HEK293T (cell line): ENCODE measurements at regions of chr11 and their contacts with region 1.

Region 1: DNA sequence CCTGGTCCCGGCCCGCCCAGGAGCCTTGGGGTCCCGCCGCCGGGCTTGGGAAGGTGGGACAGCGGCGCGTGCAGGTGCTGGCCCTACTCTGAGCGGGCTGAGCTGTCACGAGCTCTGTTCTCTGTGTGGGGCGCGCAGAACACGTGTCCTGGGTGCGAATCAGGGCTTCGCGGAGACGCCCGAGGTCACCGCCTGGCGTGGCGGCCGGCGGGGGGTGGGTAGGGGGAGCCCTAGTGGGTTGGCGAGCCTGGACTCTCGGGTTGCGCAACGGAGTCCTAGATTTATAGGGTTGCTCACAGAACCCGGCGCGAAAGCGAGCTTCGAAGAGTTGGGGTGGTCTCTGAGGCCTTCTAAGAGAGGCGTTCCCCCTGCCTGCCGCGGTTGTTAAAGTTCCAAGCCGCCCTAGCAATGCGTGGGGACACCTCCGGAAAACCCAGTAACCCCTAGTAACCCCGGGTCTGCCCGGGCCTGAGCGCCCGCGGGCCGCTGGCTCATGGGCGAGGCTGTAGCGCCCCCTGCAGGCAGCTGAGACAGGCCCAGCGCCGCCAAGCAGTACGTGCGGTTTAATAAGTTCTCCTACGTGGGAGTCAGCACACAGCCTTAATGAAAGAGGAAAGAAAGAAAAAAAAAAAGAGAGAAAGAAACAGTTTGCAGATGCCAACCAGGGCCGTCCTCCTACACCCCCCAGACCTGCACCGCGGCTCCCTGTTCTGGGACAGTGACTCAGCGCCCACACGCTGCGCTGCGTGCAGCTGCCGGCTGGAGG is 2.8 kb downstream of the ADM start:
- DNase-seq: peak; percentile 69

Region 2: DNA sequence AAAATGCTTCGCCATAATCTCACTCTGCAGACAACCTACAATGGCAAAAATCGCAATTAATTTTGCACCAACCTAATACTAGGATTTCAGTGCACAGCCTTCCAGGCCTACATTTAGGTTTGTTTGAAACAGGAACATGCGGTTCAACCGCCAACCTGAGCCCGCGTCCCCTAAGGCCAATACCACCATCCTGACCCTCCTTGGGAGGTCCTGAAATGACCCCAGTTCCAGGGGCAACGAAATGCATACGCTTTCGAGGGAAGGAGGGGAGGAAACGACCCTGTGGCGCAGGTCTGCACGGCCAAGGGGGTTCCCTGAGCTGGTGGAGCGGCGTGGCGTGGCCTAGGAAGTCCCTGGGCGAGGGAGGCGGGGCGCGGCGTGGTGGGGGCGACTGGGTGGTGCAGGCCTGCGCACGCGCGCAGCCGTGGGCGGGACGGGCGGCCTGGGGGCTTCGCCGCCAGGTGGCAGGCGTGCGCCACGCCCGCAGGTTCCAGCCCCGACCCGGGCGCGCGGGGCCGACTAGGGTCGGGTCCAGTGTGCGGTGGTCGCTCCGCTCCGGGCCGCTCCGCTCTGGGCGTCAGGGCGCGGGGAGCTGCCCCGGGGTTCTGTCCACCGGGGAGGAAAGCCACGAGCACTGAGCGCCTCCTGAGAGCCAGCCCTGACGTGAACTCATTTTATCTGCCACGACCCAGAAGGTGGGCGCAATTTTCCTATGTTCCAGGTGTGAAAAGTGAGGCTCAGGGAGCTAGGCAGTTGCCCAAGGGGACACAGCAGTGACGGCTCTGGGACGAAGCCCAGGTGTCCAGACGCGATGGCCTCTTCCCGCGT is 549.6 kb before region 1 on chr11:
- CTCF ChIA-PET with region 1: interaction called, 5 read pairs
- POLR2A ChIA-PET with region 1: interaction called, 14 read pairs
- DNase-seq: peak; percentile 96

Region 3: GRCh38 chr11:10208131-10208575 is 99.5 kb before region 1 on chr11:
- CTCF ChIA-PET with region 1: interaction called, 22 read pairs
- POLR2A ChIA-PET with region 1: interaction called, 17 read pairs
- DNase-seq: peak; percentile 43

Region 4: DNA sequence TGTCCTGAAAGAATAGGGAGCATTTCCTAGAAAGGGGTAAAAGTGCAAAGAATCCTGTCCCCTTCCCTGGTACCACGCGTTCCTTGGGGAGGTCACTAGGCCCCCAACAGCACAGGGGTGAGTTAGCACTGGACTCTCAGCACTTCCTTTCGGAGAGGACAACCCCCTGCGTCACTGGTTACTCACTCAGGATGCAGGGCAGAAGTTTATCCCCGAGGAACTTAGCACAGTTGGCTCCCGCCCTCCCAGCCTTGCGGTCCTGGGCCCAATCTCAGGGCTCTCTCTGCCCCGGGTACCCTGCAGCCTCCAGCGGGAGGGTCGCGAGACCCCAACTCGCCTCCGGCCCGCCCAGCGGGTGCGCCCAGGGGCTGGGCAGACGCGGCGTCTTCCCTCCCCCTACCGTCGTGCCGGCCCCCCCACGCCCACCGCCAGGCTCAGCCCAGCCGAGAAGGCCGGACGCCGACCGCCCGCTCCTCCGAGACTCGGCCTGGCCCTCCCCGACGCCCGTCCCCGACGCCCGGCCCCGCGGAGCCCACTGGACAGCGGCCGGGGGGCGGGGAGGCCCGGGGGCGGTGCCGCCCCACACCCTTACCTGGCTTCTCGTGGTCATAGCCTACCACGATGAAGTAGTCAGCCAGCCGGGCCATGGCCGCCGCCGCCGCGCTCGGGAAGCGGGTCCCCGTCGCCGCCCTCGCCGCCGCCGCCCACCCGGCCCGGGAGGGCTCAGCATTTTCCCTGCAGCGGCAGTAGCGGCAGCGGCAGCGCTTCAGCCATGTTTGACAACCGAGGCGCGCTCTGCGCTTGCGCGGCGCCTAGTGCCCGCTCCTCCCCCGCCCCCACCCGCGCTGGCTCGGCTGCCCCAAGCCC is 14.0 kb before region 1 on chr11 and contains the start of gene SBF2:
- CTCF ChIA-PET with region 1: interaction called, 5 read pairs
- POLR2A ChIA-PET with region 1: interaction called, 27 read pairs
- DNase-seq: peak; percentile 85

Region 5: GRCh38 chr11:10331548-10332289 is 24.1 kb after region 1 on chr11:
- CTCF ChIA-PET with region 1: no interaction called
- POLR2A ChIA-PET with region 1: no interaction called
- DNase-seq: no peak

Region 6: GRCh38 chr11:10366568-10367370 is 59.1 kb after region 1 on chr11:
- CTCF ChIA-PET with region 1: interaction called, 9 read pairs
- POLR2A ChIA-PET with region 1: interaction called, 15 read pairs
- DNase-seq: peak; percentile 76